ENCODE measurements at regions of chr19 and their contacts with region 1.

Region 1: DNA sequence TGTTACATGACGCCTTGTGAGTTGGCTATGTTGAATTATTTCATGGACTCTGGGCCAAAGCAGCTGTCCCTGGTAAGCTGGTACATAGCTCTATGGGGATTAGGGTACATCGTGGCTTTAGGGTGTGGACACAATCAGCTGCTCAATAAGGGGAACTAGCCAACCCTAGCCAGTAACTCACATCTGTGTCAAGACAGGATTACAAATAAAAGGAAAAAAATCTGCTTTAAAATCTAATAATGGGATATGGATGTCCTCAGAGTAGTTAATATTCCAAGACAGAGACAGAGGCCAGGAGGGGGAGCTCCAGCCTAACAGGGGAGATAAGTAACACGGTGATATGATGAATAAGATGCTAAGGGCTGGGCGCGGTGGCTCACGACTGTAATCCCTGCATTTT is 21.1 kb upstream of the ZNF766 start:
- DNase-seq: peak; percentile 43
- H3K4me3 ChIP-seq: no peak overlapping the region
- H3K27ac ChIP-seq: no peak overlapping the region
- H3K4me1 ChIP-seq: no peaks in the 10 kb centered on the region
- H3K27me3 ChIP-seq: no peaks in the 10 kb centered on the region
- CTCF ChIP-seq: peak; percentile 68

Region 2: DNA sequence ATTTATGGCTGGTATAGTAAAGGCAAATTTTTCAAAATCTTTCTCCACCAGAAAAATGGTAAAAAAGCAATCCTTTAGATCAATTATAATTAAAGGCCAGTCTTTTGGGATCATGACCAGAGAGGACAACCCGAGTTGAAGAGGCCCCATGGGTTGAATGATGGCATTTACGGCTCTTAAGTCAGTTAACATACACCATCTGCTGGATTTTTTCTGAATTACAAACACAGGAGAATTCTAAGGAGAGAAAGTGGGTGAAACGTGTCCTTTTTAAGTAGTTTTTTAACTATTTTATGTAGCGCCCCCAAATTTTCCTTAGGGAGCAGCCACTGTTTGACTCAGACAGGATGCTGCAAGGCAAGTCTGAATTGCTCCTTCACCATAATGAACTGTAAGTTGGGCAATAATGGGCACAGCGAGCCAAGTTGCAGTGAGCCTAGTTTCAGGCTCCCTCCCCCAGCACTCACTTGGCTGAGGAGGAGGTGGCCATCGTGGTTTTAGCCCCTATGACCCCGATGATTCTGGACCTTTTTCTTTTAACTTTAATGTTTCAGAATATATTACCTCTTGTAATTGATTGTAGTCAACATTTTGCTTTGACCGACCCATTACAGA is 500.2 kb after region 1 on chr19:
- intact Hi-C with region 1: loop called (anchors 5 kb)
- DNase-seq: no peak
- H3K4me3 ChIP-seq: no peak overlapping the region
- H3K27ac ChIP-seq: no peak overlapping the region
- H3K4me1 ChIP-seq: no peaks in the 10 kb centered on the region
- H3K27me3 ChIP-seq: no peaks in the 10 kb centered on the region
- CTCF ChIP-seq: peak; percentile 52